Prostate gland (tissue), 2 donors: ENCODE measurements at regions of chr19 and their contacts with region 1.

Region 1: GRCh38 chr19:734716-735115 is 16.2 kb upstream of the MISP start:
- DNase-seq: no peak
- H3K4me3 ChIP-seq: no peak overlapping the region
- H3K27ac ChIP-seq: no peak overlapping the region
- H3K4me1 ChIP-seq: no peaks in the 10 kb centered on the region
- H3K27me3 ChIP-seq: no peaks in the 10 kb centered on the region
- CTCF ChIP-seq: no peak
- POLR2A ChIP-seq: no peak

Region 2: GRCh38 chr19:510606-511100 is 224.1 kb before region 1 on chr19:
- intact Hi-C with region 1: no loop called
- DNase-seq: no peak
- H3K4me3 ChIP-seq: no peak overlapping the region
- H3K27ac ChIP-seq: peak overlapping the region in 1 of 2 donors; percentile 8
- H3K4me1 ChIP-seq: peaks cover 5% of the 10 kb centered on the region
- H3K27me3 ChIP-seq: no peaks in the 10 kb centered on the region
- CTCF ChIP-seq: peak; percentile 51 to 81 (median 64)
- POLR2A ChIP-seq: no peak

Region 3: DNA sequence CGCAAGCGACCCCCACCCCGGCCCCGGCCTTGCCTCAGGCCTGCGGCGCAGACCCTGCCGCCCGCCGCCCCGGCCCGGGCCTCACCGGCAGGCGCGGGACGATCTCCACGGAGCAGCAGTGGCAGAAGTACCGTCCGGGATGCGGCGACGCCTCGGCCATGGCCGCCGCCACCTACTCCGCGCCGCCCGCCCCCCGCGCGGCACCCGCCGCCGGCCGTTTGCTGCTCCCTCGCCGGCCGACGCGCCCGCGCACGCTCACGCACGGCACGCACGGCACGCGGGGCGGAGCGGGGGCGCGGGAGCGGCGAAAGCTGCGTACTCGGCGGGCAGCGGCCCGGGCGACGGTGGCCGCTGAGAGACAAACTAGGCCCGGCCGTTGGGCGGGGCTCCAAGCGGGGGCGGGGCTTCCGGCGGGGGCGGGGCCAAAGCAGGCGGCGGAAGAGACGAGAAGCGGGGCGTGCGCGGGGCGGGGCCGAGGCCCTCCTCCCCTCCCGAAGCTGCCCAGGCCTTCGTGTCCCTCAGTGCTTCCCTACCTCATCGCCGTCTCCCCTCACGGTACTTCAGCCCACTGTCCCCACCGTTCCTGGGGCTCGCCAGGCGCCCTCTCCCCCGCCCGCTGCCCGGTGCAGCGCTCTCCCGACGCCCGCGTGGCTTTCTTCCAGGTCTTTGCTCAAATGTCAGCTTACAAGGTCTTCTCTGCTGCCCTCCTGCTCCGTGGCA is 71.6 kb before region 1 on chr19 and contains the start of gene RNF126:
- intact Hi-C with region 1: loop called (anchors 2 kb)
- DNase-seq: peak; percentile 88
- H3K4me3 ChIP-seq: peak within 1 kb of the TSS; percentile 96 to 97
- H3K27ac ChIP-seq: peak within 1 kb of the TSS; percentile 90 to 96
- H3K4me1 ChIP-seq: peaks cover 31% of the 10 kb centered on the region
- H3K27me3 ChIP-seq: no peaks in the 10 kb centered on the region
- CTCF ChIP-seq: no peak
- POLR2A ChIP-seq: peak; percentile 48
- total RNA-seq, gene RNF126: 70.7 to 109 TPM

Region 4: DNA sequence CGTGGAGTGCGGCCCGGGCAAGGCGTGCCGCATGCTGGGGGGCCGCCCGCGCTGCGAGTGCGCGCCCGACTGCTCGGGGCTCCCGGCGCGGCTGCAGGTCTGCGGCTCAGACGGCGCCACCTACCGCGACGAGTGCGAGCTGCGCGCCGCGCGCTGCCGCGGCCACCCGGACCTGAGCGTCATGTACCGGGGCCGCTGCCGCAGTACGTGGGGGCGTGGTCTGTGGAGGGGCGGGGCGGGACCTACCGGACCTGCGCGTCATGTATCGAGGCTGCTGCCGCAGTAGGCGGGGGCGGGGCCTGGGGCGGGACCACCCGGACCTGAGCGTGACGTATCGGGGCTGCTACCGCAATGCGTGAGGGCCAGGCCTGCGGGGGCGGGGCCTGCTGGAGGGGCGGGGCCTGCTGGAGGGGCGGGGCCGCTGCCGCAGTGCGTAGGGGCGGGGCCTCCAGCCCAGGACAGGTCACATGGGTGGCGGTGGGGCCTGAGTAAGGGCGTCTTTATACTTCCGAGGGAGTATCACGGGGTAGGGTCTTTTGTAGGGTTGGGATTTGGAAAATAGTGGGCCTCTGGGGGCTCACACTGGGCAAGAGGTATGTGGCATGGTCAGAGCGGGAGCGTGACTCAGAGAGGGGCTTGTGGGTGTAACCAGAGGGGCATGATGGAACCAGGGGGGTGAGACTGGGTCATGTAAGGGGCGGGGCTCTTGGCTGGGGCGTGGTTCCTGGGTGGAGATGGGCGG is 54.3 kb before region 1 on chr19:
- intact Hi-C with region 1: no loop called
- DNase-seq: peak; percentile 100
- H3K4me3 ChIP-seq: peak overlapping the region; percentile 96
- H3K27ac ChIP-seq: peak overlapping the region; percentile 90 to 98
- H3K4me1 ChIP-seq: peaks cover 11% of the 10 kb centered on the region
- H3K27me3 ChIP-seq: no peaks in the 10 kb centered on the region
- CTCF ChIP-seq: peak; percentile 31 to 86 (median 56)
- POLR2A ChIP-seq: peak; percentile 93

Region 5: GRCh38 chr19:900302-901111 is 165.8 kb after region 1 on chr19:
- intact Hi-C with region 1: no loop called
- DNase-seq: no peak
- H3K4me3 ChIP-seq: no peak overlapping the region
- H3K27ac ChIP-seq: no peak overlapping the region
- H3K4me1 ChIP-seq: no peaks in the 10 kb centered on the region
- H3K27me3 ChIP-seq: no peaks in the 10 kb centered on the region
- CTCF ChIP-seq: no peak
- POLR2A ChIP-seq: no peak